PC-9 (cell line): ENCODE measurements at regions of chr11 and their contacts with region 1.

Region 1: DNA sequence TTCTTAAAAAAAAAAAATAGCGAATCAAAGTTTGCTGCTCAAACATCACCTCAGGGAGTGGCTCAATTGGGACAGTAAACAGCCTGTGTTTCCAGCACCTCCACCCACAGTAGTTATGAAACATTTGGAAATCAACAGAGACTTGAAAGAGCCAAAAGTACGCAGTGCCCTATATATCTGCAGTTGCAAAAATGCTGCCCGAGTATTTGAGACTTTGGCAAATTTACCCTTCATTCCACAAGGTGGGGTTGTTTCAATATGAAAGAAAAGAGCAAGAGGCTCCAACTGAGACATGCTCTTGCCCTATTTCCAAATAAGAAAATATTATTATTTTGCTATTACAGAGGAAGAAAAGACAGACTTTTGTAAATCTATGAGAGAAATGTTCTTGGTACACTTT is 851.1 kb upstream of the RAG2 start:
- DNase-seq: peak; percentile 1 to 50
- H3K4me3 ChIP-seq: no peak overlapping the region
- H3K27ac ChIP-seq: no peak overlapping the region
- H3K4me1 ChIP-seq: no peaks in the 10 kb centered on the region
- H3K27me3 ChIP-seq: no peaks in the 10 kb centered on the region
- CTCF ChIP-seq: peak; percentile 85

Region 2: GRCh38 chr11:37171451-37171850 is 277.7 kb before region 1 on chr11:
- CTCF ChIA-PET with region 1: no interaction called
- POLR2A ChIA-PET with region 1: no interaction called
- intact Hi-C with region 1: no loop called
- DNase-seq: no peak
- H3K4me3 ChIP-seq: no peak overlapping the region
- H3K27ac ChIP-seq: no peak overlapping the region
- H3K4me1 ChIP-seq: no peaks in the 10 kb centered on the region
- H3K27me3 ChIP-seq: no peaks in the 10 kb centered on the region
- CTCF ChIP-seq: no peak

Region 3: GRCh38 chr11:37519781-37520180 is 70.6 kb after region 1 on chr11:
- CTCF ChIA-PET with region 1: no interaction called
- POLR2A ChIA-PET with region 1: no interaction called
- intact Hi-C with region 1: loop called (anchors 5 kb)
- DNase-seq: no peak
- H3K4me3 ChIP-seq: no peak overlapping the region
- H3K27ac ChIP-seq: no peak overlapping the region
- H3K4me1 ChIP-seq: no peaks in the 10 kb centered on the region
- H3K27me3 ChIP-seq: no peaks in the 10 kb centered on the region
- CTCF ChIP-seq: no peak

Region 4: GRCh38 chr11:37621662-37622061 is 172.5 kb after region 1 on chr11:
- CTCF ChIA-PET with region 1: no interaction called
- POLR2A ChIA-PET with region 1: no interaction called
- intact Hi-C with region 1: loop called (anchors 10 kb)
- DNase-seq: no peak
- H3K4me3 ChIP-seq: no peak overlapping the region
- H3K27ac ChIP-seq: no peak overlapping the region
- H3K4me1 ChIP-seq: no peaks in the 10 kb centered on the region
- H3K27me3 ChIP-seq: no peaks in the 10 kb centered on the region
- CTCF ChIP-seq: no peak